CD8-positive, alpha-beta T cell (primary cell): ENCODE measurements at regions of chr16 and their contacts with region 1.

Region 1: GRCh38 chr16:15888072-15888976 is at the start of gene CEP20:
- DNase-seq: peak; percentile 99 to 100 (median 100)
- ATAC-seq: peak; percentile 97
- H3K4me3 ChIP-seq: peak within 1 kb of the TSS; percentile 85 to 100
- H3K4me3 Mint-ChIP-seq: peak within 1 kb of the TSS; percentile 100
- H3K27ac ChIP-seq: peak within 1 kb of the TSS; percentile 79 to 91
- H3K27ac Mint-ChIP-seq: peak within 1 kb of the TSS; percentile 98
- H3K4me1 ChIP-seq: peaks cover 23% of the 10 kb centered on the region
- H3K4me1 Mint-ChIP-seq: peaks cover 36% of the 10 kb centered on the region
- H3K27me3 ChIP-seq: no peaks in the 10 kb centered on the region
- H3K27me3 Mint-ChIP-seq: no peaks in the 10 kb centered on the region
- CTCF ChIP-seq: no peak
- total RNA-seq, gene CEP20: 12.5 to 13.6 TPM

Region 2: DNA sequence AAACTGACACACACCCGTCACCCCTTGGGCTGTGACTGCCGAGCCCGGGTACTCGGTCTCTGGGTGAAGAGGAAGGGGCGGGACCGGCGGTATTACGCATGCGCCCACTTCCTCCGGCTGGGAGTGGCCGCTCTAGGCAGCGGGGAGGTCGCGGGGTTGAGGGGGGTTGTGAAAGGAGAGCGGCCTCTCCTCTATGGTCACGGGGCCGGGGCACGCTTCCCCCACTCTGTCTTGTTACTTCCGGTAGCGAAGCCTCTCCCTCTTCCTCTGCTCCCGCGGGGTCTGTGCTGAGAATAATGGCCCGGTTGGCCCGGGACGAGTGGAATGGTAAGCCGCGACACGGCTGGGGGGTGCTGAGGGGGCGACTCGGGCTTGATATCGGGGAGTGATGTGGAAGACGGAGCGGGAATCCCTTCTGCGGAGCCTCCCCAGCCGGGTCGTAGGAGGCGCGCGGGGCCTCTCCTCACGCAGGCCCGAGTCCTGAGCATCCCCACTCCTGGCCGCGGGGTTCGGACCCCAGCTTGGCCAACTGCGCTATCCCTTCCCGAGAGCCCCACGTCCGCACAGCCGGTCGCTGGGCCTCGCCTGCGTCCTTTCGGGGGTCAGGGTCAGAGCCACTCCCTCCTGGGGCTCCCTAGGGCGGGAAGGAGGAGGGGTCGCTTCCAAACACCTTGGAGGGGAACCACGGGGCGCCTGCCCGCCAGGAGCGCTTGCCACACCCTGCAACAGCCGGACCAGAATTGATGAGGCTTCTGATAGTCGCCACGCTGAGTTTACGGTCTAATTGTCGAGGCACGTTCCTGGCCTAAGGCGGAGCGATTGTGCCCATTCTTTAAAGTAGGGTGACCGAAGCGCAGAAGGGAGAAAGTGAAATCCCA is 1255.4 kb before region 1 on chr16 and contains the start of gene BFAR:
- CTCF ChIA-PET with region 1: no interaction called
- POLR2A ChIA-PET with region 1: no interaction called
- intact Hi-C with region 1: loop called (anchors 5 to 10 kb)
- DNase-seq: peak; percentile 98 to 100 (median 99)
- ATAC-seq: peak; percentile 68
- H3K4me3 ChIP-seq: peak within 1 kb of the TSS; percentile 95 to 100
- H3K4me3 Mint-ChIP-seq: peak within 1 kb of the TSS; percentile 100
- H3K27ac ChIP-seq: peak within 1 kb of the TSS; percentile 82 to 94
- H3K27ac Mint-ChIP-seq: peak within 1 kb of the TSS; percentile 99
- H3K4me1 ChIP-seq: peaks cover 60% of the 10 kb centered on the region
- H3K4me1 Mint-ChIP-seq: peaks cover 73% of the 10 kb centered on the region
- H3K27me3 ChIP-seq: no peaks in the 10 kb centered on the region
- H3K27me3 Mint-ChIP-seq: no peaks in the 10 kb centered on the region
- CTCF ChIP-seq: no peak
- total RNA-seq, gene BFAR: 34.0 to 41.7 TPM

Region 3: GRCh38 chr16:15874745-15875314 is 13.5 kb before region 1 on chr16:
- CTCF ChIA-PET with region 1: interaction called, 10 read pairs
- POLR2A ChIA-PET with region 1: interaction called, 16 read pairs
- intact Hi-C with region 1: no loop called
- DNase-seq: peak in 3 of 9 experiments; percentile 10 to 38 (median 25)
- ATAC-seq: no peak
- H3K4me3 ChIP-seq: no peak overlapping the region
- H3K4me3 Mint-ChIP-seq: no peak overlapping the region
- H3K27ac ChIP-seq: no peak overlapping the region
- H3K27ac Mint-ChIP-seq: no peak overlapping the region
- H3K4me1 ChIP-seq: no peaks in the 10 kb centered on the region
- H3K4me1 Mint-ChIP-seq: peaks cover 2% of the 10 kb centered on the region
- H3K27me3 ChIP-seq: no peaks in the 10 kb centered on the region
- H3K27me3 Mint-ChIP-seq: no peaks in the 10 kb centered on the region
- CTCF ChIP-seq: peak; percentile 32

Region 4: GRCh38 chr16:15913046-15913698 is 24.8 kb after region 1 on chr16:
- CTCF ChIA-PET with region 1: no interaction called
- POLR2A ChIA-PET with region 1: no interaction called
- intact Hi-C with region 1: loop called in 1 of 2 experiments (anchors 2 kb)
- DNase-seq: no peak
- ATAC-seq: no peak
- H3K4me3 ChIP-seq: no peak overlapping the region
- H3K4me3 Mint-ChIP-seq: no peak overlapping the region
- H3K27ac ChIP-seq: no peak overlapping the region
- H3K27ac Mint-ChIP-seq: no peak overlapping the region
- H3K4me1 ChIP-seq: peaks cover 12% of the 10 kb centered on the region
- H3K4me1 Mint-ChIP-seq: peaks cover 17% of the 10 kb centered on the region
- H3K27me3 ChIP-seq: no peaks in the 10 kb centered on the region
- H3K27me3 Mint-ChIP-seq: no peaks in the 10 kb centered on the region
- CTCF ChIP-seq: no peak

Region 5: DNA sequence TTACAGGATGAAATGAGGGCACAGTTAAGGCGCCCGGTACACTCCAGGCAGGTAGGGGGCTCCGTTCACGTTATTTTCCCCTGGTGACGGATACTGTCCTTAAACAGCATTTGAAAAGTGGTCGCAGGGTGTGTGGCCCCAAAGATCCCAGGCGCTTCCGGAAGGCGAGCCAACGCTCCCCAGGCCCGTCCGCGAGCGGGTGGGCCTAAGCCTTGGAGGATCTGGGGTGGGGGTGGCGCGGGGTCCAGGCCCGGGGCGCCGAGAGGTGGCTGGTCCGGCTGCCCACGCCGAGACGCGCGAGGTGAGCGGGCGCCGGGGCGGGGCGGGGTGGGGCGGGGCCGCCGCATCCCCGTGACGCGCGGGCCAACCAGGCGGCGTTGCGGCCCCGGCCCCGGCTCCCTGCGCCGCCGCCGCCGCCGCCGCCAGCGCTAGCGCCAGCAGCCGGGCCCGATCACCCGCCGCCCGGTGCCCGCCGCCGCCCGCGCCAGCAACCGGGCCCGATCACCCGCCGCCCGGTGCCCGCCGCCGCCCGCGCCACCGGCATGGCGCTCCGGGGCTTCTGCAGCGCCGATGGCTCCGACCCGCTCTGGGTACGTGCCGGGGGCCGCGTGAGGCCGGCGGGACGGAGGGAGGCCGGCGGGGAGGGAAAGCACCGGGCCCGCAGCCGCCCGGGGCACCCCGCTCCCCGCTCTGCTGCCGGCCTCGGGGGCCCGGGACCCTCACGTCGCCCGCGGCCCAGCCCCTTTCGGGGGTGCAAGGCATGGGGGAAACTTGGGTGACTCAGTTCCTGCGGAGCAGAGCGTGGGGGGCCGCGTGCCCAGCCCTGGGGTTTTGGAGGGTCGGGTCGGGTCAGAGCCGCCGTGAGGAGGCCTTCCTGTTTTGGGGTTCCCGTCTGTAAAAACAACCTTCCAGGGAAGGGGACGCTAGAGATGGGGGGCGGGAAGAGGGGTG is 61.2 kb after region 1 on chr16 and contains the start of gene ABCC1:
- CTCF ChIA-PET with region 1: no interaction called
- POLR2A ChIA-PET with region 1: interaction called, 7 read pairs
- intact Hi-C with region 1: loop called (anchors 1 kb)
- DNase-seq: peak; percentile 16 to 86 (median 72)
- ATAC-seq: peak; percentile 70
- H3K4me3 ChIP-seq: peak within 1 kb of the TSS; percentile 73 to 78
- H3K4me3 Mint-ChIP-seq: peak within 1 kb of the TSS; percentile 95
- H3K27ac ChIP-seq: peak within 1 kb of the TSS; percentile 75 to 77
- H3K27ac Mint-ChIP-seq: peak within 1 kb of the TSS; percentile 96
- H3K4me1 ChIP-seq: peaks cover 27% of the 10 kb centered on the region
- H3K4me1 Mint-ChIP-seq: peaks cover 34% of the 10 kb centered on the region
- H3K27me3 ChIP-seq: no peaks in the 10 kb centered on the region
- H3K27me3 Mint-ChIP-seq: no peaks in the 10 kb centered on the region
- CTCF ChIP-seq: peak; percentile 28
- total RNA-seq, gene ABCC1: 41.1 to 41.2 TPM

Region 6: DNA sequence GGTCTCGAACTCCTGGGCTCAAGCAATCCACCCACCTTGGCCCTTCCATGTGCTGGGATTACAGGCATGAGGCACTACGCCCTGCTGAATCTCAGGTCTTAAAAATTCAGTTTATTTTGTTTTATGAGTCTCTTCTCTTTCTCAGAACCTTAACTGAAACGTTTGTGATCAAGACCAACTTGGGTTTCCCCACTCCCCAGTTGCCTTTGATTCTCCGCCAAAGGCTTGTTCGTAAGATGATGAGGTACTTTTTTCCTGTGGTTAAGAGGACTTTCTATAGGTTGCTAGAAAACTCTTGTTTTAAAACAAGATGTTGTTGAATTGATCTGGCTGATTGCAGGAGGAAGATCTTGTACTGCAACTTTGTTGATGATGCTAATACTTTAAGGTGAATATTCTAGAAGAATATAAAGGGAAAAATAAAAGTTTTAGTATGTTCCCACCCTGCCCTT is 72.8 kb after region 1 on chr16:
- CTCF ChIA-PET with region 1: no interaction called
- POLR2A ChIA-PET with region 1: no interaction called
- intact Hi-C with region 1: loop called in 1 of 2 experiments (anchors 1 kb)
- DNase-seq: peak; percentile 34 to 95 (median 69)
- ATAC-seq: peak; percentile 77
- H3K4me3 ChIP-seq: peak overlapping the region; percentile 38 to 46
- H3K4me3 Mint-ChIP-seq: peak overlapping the region; percentile 81
- H3K27ac ChIP-seq: peak overlapping the region; percentile 80 to 92
- H3K27ac Mint-ChIP-seq: peak overlapping the region; percentile 95
- H3K4me1 ChIP-seq: peaks cover 58% of the 10 kb centered on the region
- H3K4me1 Mint-ChIP-seq: peaks cover 79% of the 10 kb centered on the region
- H3K27me3 ChIP-seq: no peaks in the 10 kb centered on the region
- H3K27me3 Mint-ChIP-seq: no peaks in the 10 kb centered on the region
- CTCF ChIP-seq: no peak

Region 7: GRCh38 chr16:15988268-15989013 is 100.1 kb after region 1 on chr16:
- CTCF ChIA-PET with region 1: no interaction called
- POLR2A ChIA-PET with region 1: no interaction called
- intact Hi-C with region 1: no loop called
- DNase-seq: no peak
- ATAC-seq: peak; percentile 21
- H3K4me3 ChIP-seq: no peak overlapping the region
- H3K4me3 Mint-ChIP-seq: no peak overlapping the region
- H3K27ac ChIP-seq: peak overlapping the region in 1 of 2 experiments; percentile 19
- H3K27ac Mint-ChIP-seq: peak overlapping the region; percentile 5
- H3K4me1 ChIP-seq: peaks cover 13% of the 10 kb centered on the region
- H3K4me1 Mint-ChIP-seq: peaks cover 56% of the 10 kb centered on the region
- H3K27me3 ChIP-seq: no peaks in the 10 kb centered on the region
- H3K27me3 Mint-ChIP-seq: no peaks in the 10 kb centered on the region
- CTCF ChIP-seq: no peak

Region 8: DNA sequence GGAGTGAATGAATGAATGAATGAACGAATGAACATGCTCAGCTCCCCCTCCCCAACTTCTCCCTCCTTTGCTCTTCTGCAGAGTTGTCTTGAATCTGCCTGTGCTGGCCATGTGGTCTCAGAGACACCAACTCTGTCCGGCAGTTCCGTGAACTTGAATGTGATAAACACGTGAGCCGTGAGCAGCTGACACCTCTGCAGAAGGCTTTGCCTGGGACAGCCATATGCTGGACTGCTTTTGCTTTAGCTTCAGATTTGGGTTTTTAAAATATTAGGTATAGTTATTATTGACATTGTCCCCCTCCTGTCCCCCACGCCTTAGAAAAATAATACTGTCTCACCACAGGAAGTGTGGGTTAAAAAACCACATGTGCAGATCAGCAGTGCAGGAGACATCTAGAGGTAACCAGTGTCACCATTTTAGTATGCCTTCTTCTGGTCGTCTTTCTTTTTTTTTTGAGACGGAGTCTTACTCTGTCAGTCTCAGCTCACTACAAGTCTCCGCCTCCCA is 144.9 kb after region 1 on chr16:
- CTCF ChIA-PET with region 1: interaction called, 4 read pairs
- POLR2A ChIA-PET with region 1: interaction called, 5 read pairs
- intact Hi-C with region 1: loop called (anchors 5 kb)
- DNase-seq: peak in 6 of 9 experiments; percentile 9 to 79 (median 41)
- ATAC-seq: peak; percentile 83
- H3K4me3 ChIP-seq: no peak overlapping the region
- H3K4me3 Mint-ChIP-seq: peak overlapping the region; percentile 37
- H3K27ac ChIP-seq: peak overlapping the region in 1 of 2 experiments; percentile 60
- H3K27ac Mint-ChIP-seq: peak overlapping the region; percentile 86
- H3K4me1 ChIP-seq: peaks cover 19% of the 10 kb centered on the region
- H3K4me1 Mint-ChIP-seq: peaks cover 23% of the 10 kb centered on the region
- H3K27me3 ChIP-seq: no peaks in the 10 kb centered on the region
- H3K27me3 Mint-ChIP-seq: no peaks in the 10 kb centered on the region
- CTCF ChIP-seq: no peak